ENCODE measurements at regions of chr4 and their contacts with region 1.

Region 1: DNA sequence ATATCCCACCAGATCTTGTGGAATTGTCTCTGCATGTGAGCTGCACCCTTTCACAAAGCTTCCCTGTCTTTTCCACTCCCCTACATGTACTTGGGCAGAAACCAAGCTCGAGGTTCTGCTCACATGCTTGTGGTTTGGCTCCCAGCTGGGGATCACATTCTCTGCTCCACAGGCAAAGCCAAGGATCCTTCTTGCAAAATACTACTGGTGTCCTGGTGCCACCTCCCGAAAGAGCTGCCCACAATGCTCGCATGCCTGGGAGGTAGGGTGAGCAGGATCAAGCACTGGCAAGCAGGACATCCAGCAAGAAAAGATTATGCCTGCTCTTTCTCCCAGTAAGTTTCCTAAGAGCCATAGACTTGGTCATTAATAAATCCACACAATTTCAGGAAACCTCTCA is 45.1 kb upstream of the PPARGC1A start:
- DNase-seq: peak; percentile 94 to 98
- ATAC-seq: peak; percentile 80 to 84
- H3K4me3 ChIP-seq: no peak overlapping the region
- H3K27ac ChIP-seq: peak overlapping the region; percentile 83 to 92 (median 90)
- H3K4me1 ChIP-seq: peaks cover 29 to 67% of the 10 kb centered on the region in 2 donors
- H3K27me3 ChIP-seq: no peaks in the 10 kb centered on the region
- CTCF ChIP-seq: no peak
- POLR2A ChIP-seq: peak; percentile 51 to 67

Region 2: GRCh38 chr4:23384741-23385140 is 550.2 kb before region 1 on chr4:
- in situ Hi-C with region 1: loop called in 1 of 4 experiments (anchors 25 kb)
- intact Hi-C with region 1: no loop called
- DNase-seq: no peak
- ATAC-seq: no peak
- H3K4me3 ChIP-seq: no peak overlapping the region
- H3K27ac ChIP-seq: peak overlapping the region; percentile 6 to 89 (median 88)
- H3K4me1 ChIP-seq: peaks cover 38 to 50% of the 10 kb centered on the region in 2 donors
- H3K27me3 ChIP-seq: no peaks in the 10 kb centered on the region
- CTCF ChIP-seq: no peak
- POLR2A ChIP-seq: no peak

Region 3: DNA sequence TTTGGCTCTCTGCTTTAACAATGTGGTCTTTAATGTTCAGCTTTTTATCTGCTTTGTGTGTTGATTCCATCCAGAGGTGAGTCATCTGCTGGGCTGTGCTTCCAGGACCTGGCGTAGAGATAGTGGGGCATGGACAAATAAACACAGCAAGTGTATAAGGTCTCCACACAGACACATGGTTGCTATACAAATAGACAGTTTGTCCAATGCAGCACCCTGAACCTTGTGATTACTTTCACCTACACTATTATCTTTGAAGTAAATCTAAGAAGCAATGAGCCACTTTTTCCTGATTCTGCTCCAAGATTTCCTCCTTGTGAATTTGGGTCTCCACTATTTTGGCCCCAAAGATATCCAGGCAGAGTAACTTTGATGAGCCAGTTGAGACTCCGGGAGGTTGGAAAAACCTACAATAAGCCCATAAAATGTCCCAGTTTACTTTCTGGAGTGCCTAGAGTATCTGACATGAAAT is 57.1 kb before region 1 on chr4:
- in situ Hi-C with region 1: loop called in 2 of 4 experiments (anchors 5 kb)
- intact Hi-C with region 1: loop called (anchors 1 kb)
- DNase-seq: peak; percentile 75 to 78
- ATAC-seq: peak; percentile 32 to 62
- H3K4me3 ChIP-seq: peak overlapping the region in 2 of 4 donors; percentile 37 to 45
- H3K27ac ChIP-seq: peak overlapping the region; percentile 84 to 99 (median 90)
- H3K4me1 ChIP-seq: peaks cover 45 to 88% of the 10 kb centered on the region in 2 donors
- H3K27me3 ChIP-seq: no peaks in the 10 kb centered on the region
- CTCF ChIP-seq: no peak
- POLR2A ChIP-seq: peak; percentile 36 to 57

Region 4: GRCh38 chr4:23903859-23904438 is 31.0 kb before region 1 on chr4:
- in situ Hi-C with region 1: no loop called
- intact Hi-C with region 1: loop called (anchors 1 kb)
- DNase-seq: peak; percentile 65 to 84
- ATAC-seq: peak; percentile 95 to 97
- H3K4me3 ChIP-seq: peak overlapping the region; percentile 6 to 27 (median 22)
- H3K27ac ChIP-seq: peak overlapping the region; percentile 64 to 84 (median 80)
- H3K4me1 ChIP-seq: peaks cover 12 to 20% of the 10 kb centered on the region in 2 donors
- H3K27me3 ChIP-seq: no peaks in the 10 kb centered on the region
- CTCF ChIP-seq: no peak
- POLR2A ChIP-seq: peak; percentile 37 to 67

Region 5: GRCh38 chr4:24266951-24267738 is 332.2 kb after region 1 on chr4:
- in situ Hi-C with region 1: no loop called
- intact Hi-C with region 1: loop called (anchors 5 kb)
- DNase-seq: no peak
- ATAC-seq: no peak
- H3K4me3 ChIP-seq: no peak overlapping the region
- H3K27ac ChIP-seq: peak overlapping the region in 2 of 4 donors; percentile 79 to 83
- H3K4me1 ChIP-seq: peaks cover 18 to 36% of the 10 kb centered on the region in 2 donors
- H3K27me3 ChIP-seq: no peaks in the 10 kb centered on the region
- CTCF ChIP-seq: no peak
- POLR2A ChIP-seq: no peak

Region 6: DNA sequence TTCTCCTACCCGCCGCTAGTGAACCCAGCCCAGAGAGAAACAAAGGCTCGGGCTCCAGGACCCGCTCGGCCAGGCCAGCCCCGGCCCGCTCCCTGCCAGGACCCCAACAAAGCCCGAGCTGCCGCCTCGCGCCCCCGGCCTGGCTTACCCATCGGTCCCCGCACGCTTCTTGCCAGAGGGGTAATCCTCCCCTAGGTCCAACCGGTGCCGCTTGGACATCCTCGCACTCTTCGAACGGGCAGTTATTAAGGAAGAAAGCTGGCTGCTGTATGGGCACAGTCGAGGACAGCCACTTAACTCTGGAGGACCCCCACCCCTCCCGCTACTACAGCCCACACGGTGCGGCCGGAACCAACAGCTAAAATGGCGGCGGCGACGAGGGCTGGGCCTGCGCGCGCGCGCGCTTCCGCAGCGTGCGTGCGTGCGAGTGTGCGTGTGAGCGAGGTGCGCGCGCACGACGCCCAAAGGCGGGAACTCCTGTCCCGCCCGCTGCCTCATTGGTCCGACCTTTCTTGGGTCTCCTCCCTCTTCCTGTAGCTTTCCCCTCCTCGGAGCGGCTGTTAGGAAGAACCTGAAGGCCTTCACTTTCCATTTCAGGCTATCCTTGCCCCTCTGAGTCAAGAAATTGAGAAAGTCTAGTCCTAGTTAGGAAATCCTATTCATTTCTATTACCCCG is 649.4 kb after region 1 on chr4 and contains the start of gene DHX15:
- in situ Hi-C with region 1: no loop called
- intact Hi-C with region 1: loop called (anchors 10 kb)
- DNase-seq: peak; percentile 91 to 95
- ATAC-seq: peak; percentile 93 to 94
- H3K4me3 ChIP-seq: peak within 1 kb of the TSS; percentile 81 to 98 (median 94)
- H3K27ac ChIP-seq: peak within 1 kb of the TSS; percentile 92 to 99 (median 98)
- H3K4me1 ChIP-seq: peaks cover 29 to 37% of the 10 kb centered on the region in 2 donors
- H3K27me3 ChIP-seq: no peaks in the 10 kb centered on the region
- CTCF ChIP-seq: peak in 3 of 5 experiments; percentile 10 to 11 (median 11)
- POLR2A ChIP-seq: peak; percentile 84 to 86
- total RNA-seq, gene DHX15: 50.1 to 88.1 (median 61.2) TPM

Measured in gastrocnemius medialis (tissue), 4 donors.